Endothelial cell of umbilical vein (primary cell): ENCODE measurements at regions of chr2 and their contacts with region 1.

Region 1: DNA sequence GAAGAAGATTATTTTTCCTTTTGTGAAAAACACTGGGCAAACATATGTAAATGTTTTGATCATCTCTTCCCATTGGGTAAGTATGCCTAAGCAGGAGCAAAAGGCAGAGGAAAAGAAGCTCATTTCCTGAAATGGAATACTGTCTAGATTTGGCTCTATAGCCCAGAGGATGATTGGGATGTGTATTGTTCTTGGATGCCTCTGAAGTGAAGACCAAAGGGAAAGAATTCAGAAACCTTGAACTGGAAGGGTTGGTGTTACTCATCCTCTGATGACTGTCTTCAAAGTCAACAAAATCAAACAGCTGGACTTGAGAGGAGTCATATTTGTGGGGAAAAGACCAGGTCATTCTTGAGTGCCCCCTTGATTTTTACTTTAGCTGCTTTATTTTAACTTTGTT is 112.6 kb upstream of the NT5C1B start:
- DNase-seq: no peak
- H3K4me3 ChIP-seq: no peak overlapping the region
- H3K27ac ChIP-seq: no peak overlapping the region
- H3K4me1 ChIP-seq: no peaks in the 10 kb centered on the region
- H3K27me3 ChIP-seq: no peaks in the 10 kb centered on the region
- CTCF ChIP-seq: no peak
- POLR2A ChIP-seq: no peak

Region 2: DNA sequence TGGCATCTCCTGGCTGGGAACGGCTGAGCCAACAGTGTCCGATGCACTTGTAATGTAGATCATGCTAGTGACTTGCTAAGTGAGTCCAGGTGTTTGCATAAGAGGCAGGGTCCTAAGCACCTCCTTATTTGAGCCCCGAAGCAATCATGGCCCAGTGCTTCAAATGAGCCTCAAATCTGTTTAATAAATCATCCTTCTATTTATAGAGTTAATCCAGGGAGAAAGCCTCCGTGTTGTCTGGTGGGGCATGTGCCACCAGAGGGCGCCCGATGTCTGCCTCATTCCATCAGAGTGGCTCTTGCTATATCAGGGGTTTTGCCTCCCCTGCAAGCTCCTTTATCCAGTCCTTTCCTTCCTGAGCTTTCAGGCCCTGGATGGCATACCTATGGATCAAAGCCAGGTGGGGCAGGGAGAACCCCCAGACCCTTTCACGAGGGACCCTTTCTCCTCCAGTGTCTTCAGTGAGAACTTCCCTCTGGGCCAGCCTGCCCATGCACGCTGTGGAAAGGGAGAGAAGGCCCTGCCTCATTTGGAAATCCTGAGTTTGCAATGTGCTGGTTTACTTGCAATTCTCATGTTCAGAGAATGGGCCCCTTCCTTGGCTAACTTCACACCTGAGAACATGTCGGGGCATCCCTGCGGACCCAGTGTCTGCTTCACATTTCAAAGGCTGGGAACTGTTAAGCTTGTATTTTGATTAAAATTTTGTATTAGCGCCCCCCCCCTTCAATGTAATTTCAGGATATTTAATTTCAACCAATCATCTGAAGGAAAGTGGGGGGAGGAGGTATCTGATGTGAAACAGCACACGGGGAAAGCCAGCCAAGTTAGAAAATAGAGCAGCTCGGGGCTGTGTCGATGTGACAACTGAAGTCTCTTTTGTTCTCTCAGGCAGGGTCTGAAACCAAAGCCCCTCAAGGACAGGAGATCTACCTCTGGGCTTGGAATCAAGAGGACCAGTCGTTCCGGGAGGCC is 181.2 kb before region 1 on chr2:
- CTCF ChIA-PET with region 1: no interaction called
- POLR2A ChIA-PET with region 1: no interaction called
- dilution Hi-C with region 1: no loop called
- intact Hi-C with region 1: no loop called
- DNase-seq: peak; percentile 78
- H3K4me3 ChIP-seq: no peak overlapping the region
- H3K27ac ChIP-seq: no peak overlapping the region
- H3K4me1 ChIP-seq: no peaks in the 10 kb centered on the region
- H3K27me3 ChIP-seq: no peaks in the 10 kb centered on the region
- CTCF ChIP-seq: peak; percentile 84 to 89
- POLR2A ChIP-seq: no peak

Region 3: DNA sequence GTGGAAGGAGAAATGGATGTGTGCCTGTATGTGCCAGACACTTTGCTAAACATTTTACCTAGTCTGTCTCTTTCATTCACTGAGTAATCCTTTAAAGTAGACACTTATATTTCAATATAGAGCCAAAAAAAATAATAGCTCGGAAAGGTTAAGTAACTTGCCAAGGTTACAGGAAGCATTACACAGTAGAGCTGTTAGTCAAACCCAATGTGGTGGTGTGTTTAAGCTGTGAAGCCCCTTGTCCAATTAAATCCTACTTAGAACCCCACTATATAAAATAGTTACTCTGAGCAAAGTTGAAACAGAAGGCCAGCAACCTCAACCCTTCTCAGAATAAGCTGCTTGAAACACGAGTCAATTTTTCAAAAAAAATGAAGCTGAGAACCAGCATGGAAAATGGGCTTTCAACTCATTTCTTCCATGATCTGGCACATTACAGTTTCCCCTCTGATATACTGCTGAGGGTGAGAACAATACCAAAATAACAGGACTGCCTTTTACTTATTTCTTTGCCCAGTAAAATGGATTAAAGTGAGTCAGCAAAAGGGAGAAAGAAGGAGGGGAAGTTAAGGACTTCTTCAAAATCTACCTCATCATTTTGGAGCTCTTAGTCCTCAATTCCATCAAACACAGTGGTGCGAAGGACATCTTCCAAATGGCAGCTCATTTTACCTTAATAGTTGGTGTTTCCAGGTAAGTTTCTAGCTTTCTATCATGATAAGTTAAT is 149.5 kb before region 1 on chr2:
- CTCF ChIA-PET with region 1: no interaction called
- POLR2A ChIA-PET with region 1: no interaction called
- dilution Hi-C with region 1: no loop called
- intact Hi-C with region 1: no loop called
- DNase-seq: peak; percentile 62
- H3K4me3 ChIP-seq: no peak overlapping the region
- H3K27ac ChIP-seq: peak overlapping the region; percentile 50
- H3K4me1 ChIP-seq: peaks cover 18% of the 10 kb centered on the region
- H3K27me3 ChIP-seq: no peaks in the 10 kb centered on the region
- CTCF ChIP-seq: no peak
- POLR2A ChIP-seq: no peak

Region 4: DNA sequence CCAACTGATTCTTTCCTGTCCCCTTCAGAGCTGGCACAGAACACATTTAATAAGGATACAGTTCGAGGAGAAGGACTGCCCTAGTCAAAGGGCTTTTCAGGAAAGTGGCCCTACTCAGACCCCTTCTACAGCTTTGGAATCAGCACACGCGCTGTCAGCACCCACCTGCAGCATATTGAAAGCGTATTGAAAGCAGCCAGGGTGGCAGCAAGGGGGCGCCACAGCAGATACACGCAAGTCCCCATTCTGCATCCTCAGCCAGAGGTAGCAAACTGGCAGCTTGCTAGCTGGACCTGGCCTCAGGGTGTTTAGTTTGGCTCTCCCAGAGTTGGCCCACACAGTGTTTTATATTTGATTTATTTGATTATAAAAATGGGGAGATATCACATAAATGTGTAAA is 11.6 kb before region 1 on chr2:
- CTCF ChIA-PET with region 1: interaction called, 17 read pairs
- POLR2A ChIA-PET with region 1: no interaction called
- dilution Hi-C with region 1: no loop called
- intact Hi-C with region 1: no loop called
- DNase-seq: no peak
- H3K4me3 ChIP-seq: no peak overlapping the region
- H3K27ac ChIP-seq: no peak overlapping the region
- H3K4me1 ChIP-seq: no peaks in the 10 kb centered on the region
- H3K27me3 ChIP-seq: no peaks in the 10 kb centered on the region
- CTCF ChIP-seq: peak in 1 of 2 donors; percentile 13
- POLR2A ChIP-seq: no peak